Activated CD4-positive, alpha-beta T cell treated with anti-CD3 and anti-CD28 coated beads for 36 hours (primary cell): ENCODE measurements at regions of chr7 and their contacts with region 1.

Region 1: GRCh38 chr7:120987683-120988590 is 574 bp upstream of the CPED1 start:
- DNase-seq: peak; percentile 91
- ATAC-seq: peak; percentile 99
- H3K4me3 Mint-ChIP-seq: peak overlapping the region; percentile 53
- H3K27ac Mint-ChIP-seq: no peak overlapping the region
- H3K4me1 Mint-ChIP-seq: peaks cover 17% of the 10 kb centered on the region
- H3K27me3 Mint-ChIP-seq: peaks cover 38% of the 10 kb centered on the region

Region 2: DNA sequence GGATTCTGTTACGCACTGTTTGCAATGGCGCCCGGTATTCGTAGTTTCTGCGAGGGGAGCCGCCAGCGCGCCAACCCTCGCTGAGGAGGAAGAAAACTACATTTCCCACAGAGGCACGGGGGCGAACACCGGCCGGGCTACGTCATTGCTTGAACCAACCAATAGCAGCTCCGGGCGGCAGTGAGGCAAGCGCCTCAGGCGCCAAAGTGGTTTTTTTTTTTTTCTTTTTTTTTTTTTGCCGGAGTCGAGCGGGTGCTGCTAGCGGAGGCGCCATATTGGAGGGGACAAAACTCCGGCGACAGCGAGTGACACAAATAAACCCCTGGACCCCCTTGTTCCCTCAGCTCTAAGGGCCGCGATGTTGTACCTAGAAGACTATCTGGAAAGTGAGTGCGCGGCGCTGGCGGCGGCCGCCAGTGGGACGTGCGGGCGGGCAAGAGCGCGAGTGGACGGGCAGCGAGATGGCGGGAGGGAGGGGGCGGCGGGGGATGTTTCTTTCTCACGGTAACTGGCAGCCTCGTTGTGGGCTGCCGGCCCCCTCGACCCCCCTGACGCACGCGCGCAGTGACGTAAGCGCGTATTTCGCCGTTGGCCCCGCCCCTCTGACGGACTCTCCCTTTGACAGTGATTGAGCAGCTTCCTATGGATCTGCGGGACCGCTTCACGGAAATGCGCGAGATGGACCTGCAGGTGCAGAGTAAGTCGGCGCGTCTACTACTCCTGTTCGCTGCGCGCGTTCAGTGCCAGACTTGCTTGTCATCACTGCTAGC is 37.2 kb before region 1 on chr7 and contains the start of gene ING3:
- CTCF ChIA-PET with region 1: no interaction called
- POLR2A ChIA-PET with region 1: no interaction called
- intact Hi-C with region 1: loop called (anchors 2 kb)
- DNase-seq: peak; percentile 97
- ATAC-seq: peak; percentile 94
- H3K4me3 Mint-ChIP-seq: peak within 1 kb of the TSS; percentile 97
- H3K27ac Mint-ChIP-seq: peak within 1 kb of the TSS; percentile 97
- H3K4me1 Mint-ChIP-seq: peaks cover 22% of the 10 kb centered on the region
- H3K27me3 Mint-ChIP-seq: peaks cover 5% of the 10 kb centered on the region
- total RNA-seq, gene ING3: 23.4 to 26.5 TPM

Region 3: DNA sequence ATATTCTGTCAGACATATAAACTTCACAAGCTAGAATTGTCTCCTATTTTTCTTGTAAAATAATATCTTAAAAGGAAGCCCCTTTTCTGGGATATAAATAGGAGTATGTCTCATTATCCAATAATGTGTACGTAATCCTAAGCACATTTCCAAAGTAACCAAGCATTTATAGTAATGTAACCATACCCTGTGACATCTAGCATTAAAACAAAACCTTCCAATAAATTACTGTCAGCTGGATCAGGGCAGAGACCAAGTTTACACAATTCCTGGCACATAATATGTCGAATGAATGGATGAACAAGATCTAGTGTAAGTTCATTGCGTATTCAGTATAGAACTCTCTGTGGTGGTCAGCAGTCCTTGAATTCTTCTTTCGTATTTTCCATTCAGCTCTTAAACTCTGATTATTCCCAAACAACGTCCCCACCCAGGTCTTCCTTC is 14.8 kb after region 1 on chr7:
- CTCF ChIA-PET with region 1: interaction called, 16 read pairs
- POLR2A ChIA-PET with region 1: no interaction called
- intact Hi-C with region 1: no loop called
- DNase-seq: no peak
- ATAC-seq: no peak
- H3K4me3 Mint-ChIP-seq: no peak overlapping the region
- H3K27ac Mint-ChIP-seq: no peak overlapping the region
- H3K4me1 Mint-ChIP-seq: peaks cover 8% of the 10 kb centered on the region
- H3K27me3 Mint-ChIP-seq: peaks cover 15% of the 10 kb centered on the region

Region 4: GRCh38 chr7:121081327-121081936 is 93.5 kb after region 1 on chr7:
- CTCF ChIA-PET with region 1: interaction called, 57 read pairs
- POLR2A ChIA-PET with region 1: no interaction called
- intact Hi-C with region 1: loop called (anchors 1 kb)
- DNase-seq: no peak
- ATAC-seq: peak; percentile 65
- H3K4me3 Mint-ChIP-seq: no peak overlapping the region
- H3K27ac Mint-ChIP-seq: no peak overlapping the region
- H3K4me1 Mint-ChIP-seq: no peaks in the 10 kb centered on the region
- H3K27me3 Mint-ChIP-seq: peaks cover 12% of the 10 kb centered on the region

Region 5: DNA sequence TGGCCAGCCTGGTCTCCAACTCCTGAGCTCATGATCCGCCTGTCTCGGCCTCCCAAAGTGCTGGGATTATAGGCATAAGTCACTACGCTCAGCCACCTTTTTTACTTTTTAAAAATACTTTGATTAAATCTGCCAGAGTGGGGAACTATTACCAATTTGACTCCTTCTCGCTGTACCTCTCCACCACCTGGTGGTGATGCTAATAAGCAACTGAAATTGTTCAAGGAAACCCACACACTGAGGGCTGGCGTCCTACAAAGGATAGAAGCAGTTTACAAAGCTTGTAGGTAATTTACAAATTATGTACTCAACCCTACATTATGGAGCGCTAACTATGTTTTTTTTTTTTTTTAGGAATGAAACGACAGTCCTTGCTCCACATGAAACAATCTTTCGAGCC is 111.6 kb after region 1 on chr7:
- CTCF ChIA-PET with region 1: interaction called, 18 read pairs
- POLR2A ChIA-PET with region 1: no interaction called
- intact Hi-C with region 1: no loop called
- DNase-seq: no peak
- ATAC-seq: no peak
- H3K4me3 Mint-ChIP-seq: no peak overlapping the region
- H3K27ac Mint-ChIP-seq: no peak overlapping the region
- H3K4me1 Mint-ChIP-seq: no peaks in the 10 kb centered on the region
- H3K27me3 Mint-ChIP-seq: peaks cover 3% of the 10 kb centered on the region

Region 6: GRCh38 chr7:121107923-121108498 is 120.1 kb after region 1 on chr7:
- CTCF ChIA-PET with region 1: interaction called, 27 read pairs
- POLR2A ChIA-PET with region 1: no interaction called
- intact Hi-C with region 1: loop called (anchors 1 kb)
- DNase-seq: no peak
- ATAC-seq: peak; percentile 87
- H3K4me3 Mint-ChIP-seq: no peak overlapping the region
- H3K27ac Mint-ChIP-seq: no peak overlapping the region
- H3K4me1 Mint-ChIP-seq: no peaks in the 10 kb centered on the region
- H3K27me3 Mint-ChIP-seq: peaks cover 10% of the 10 kb centered on the region